Ascending aorta (tissue), 2 donors: ENCODE measurements at regions of chr10 and their contacts with region 1.

Region 1: DNA sequence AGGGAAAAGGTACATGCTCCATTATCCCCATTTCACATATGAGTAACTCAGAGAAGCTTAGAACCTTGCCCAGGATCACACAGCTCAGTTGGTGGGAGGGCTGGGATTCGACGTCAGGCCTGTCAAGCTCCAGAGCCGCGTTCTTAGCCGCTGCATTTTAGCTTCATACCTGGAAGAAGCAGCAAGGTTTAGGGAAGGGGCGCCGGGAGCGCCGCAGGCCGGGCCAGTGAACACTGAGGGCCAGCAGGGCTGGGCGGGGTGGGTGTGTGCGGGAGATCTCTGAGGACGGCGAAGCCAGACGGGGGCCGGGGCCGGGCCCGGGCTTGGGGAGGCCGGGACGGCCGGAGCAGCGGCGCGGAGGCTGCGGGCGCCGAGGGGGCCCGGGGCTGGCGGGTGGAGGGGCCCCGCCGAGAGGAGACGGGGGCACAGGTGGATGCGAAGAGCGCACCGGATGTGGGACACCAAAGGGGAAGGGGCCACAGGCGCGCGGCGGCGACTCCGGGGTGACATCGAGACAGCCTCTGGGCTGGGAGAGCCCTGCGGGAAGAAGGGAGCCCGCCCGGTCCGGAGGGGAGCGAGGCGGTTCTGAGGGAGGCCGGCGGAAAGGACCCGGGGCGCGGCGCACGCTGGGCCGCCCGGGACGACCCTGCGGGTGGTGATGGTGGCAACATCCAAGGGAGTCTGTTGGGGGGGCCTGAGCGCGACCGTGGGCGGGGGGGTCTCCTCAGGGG is 498 bp downstream of the NDST2 start:
- DNase-seq: no peak
- H3K4me3 ChIP-seq: peak overlapping the region; percentile 85 to 97
- H3K27ac ChIP-seq: peak overlapping the region; percentile 94 to 97
- H3K4me1 ChIP-seq: peaks cover 8 to 26% of the 10 kb centered on the region in 2 donors
- H3K27me3 ChIP-seq: no peaks in the 10 kb centered on the region
- CTCF ChIP-seq: no peak

Region 2: GRCh38 chr10:73772280-73773151 is 38.4 kb before region 1 on chr10:
- intact Hi-C with region 1: loop called (anchors 5 kb)
- DNase-seq: peak; percentile 45 to 93
- H3K4me3 ChIP-seq: peak overlapping the region; percentile 76 to 91
- H3K27ac ChIP-seq: peak overlapping the region; percentile 95 to 99
- H3K4me1 ChIP-seq: peaks cover 11 to 23% of the 10 kb centered on the region in 2 donors
- H3K27me3 ChIP-seq: no peaks in the 10 kb centered on the region
- CTCF ChIP-seq: peak in 2 of 3 experiments; percentile 2 to 24

Region 3: DNA sequence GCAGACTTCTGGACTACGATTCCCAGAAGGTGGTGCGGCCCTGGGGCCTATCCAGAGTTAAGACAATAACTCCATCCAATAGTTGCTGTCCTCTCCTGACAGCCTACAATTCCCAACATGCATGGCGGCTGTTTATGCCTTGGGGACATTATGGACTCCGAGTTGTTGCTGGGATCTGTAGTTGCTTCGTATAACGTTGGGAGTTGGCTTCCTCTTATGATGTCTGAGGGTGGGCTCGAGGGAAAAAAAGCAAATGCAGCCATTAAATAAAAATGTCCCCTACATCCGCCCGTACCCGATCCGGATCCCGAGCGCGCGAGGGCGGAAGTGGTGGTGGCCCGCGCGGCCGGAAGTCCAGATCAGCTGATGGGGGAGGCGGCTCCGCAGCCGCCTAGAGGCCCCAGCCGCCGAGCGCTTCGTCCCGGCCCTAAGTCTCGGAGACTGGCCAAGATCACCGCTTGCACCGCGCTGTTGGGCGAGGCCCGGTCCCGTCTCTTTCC is 25.6 kb before region 1 on chr10 and contains the start of gene ZSWIM8:
- intact Hi-C with region 1: loop called (anchors 1 kb)
- DNase-seq: peak; percentile 81 to 96
- H3K4me3 ChIP-seq: peak within 1 kb of the TSS; percentile 89 to 92
- H3K27ac ChIP-seq: peak within 1 kb of the TSS; percentile 88 to 92
- H3K4me1 ChIP-seq: peaks cover 15 to 35% of the 10 kb centered on the region in 2 donors
- H3K27me3 ChIP-seq: no peaks in the 10 kb centered on the region
- CTCF ChIP-seq: no peak
- total RNA-seq, gene ZSWIM8: 106 TPM

Region 4: GRCh38 chr10:73879296-73880173 is 68.6 kb after region 1 on chr10:
- intact Hi-C with region 1: loop called (anchors 2 kb)
- DNase-seq: peak; percentile 71 to 95
- H3K4me3 ChIP-seq: no peak overlapping the region
- H3K27ac ChIP-seq: peak overlapping the region; percentile 35 to 68
- H3K4me1 ChIP-seq: peaks cover 0 to 18% of the 10 kb centered on the region in 2 donors
- H3K27me3 ChIP-seq: no peaks in the 10 kb centered on the region
- CTCF ChIP-seq: peak; percentile 91 to 99 (median 97)